Posterior vena cava (tissue), 2 donors: ENCODE measurements at regions of chr10 and their contacts with region 1.

Region 1: GRCh38 chr10:28604567-28605536 is 71.9 kb downstream of the WAC start:
- DNase-seq: no peak

Region 2: GRCh38 chr10:30565449-30565848 is 1960.6 kb after region 1 on chr10:
- intact Hi-C with region 1: loop called in 1 of 2 experiments (anchors 5 kb)
- DNase-seq: no peak